ENCODE measurements at regions of chr4 and their contacts with region 1.

Region 1: DNA sequence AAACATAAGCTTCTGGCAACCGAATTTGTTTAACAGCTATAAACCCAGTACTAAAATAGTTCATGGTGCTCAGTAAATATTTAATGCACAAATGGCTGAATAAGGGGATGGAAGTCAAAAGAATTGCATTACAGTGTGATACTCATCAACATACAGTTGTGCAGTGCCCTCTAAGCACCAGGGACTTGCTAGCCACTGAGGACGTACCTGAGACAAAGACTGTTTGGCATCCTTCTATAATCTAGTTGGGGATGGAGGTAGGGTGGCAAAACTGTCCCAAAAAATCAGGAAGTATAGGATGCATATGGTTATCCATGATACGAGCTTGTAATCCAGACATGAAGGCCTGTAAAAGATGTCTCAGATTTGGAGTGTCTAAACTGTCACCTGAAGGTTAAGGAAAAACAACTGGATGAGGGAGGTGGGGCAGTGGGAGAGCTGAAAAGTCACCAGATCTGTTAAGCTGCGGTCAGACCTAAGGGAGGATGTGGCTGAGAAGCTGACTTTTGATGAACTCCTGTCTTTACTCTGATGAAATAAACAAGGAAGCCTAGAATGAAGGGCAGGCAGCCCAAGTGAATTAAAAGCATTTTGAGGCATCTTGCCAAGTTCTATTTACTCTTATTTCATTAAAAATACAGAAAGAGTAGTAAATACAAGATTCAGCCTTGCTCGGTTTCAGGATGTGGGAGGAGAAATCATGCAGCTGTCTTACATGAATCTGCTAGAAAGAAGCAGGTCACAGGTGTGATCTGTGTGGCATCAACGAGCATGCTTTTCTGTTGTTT is 12.0 kb upstream of the CD38 start:
- DNase-seq: peak in 11 of 14 experiments; percentile 19 to 87 (median 46)
- ATAC-seq: peak; percentile 82
- H3K4me3 ChIP-seq: no peak overlapping the region
- H3K4me3 Mint-ChIP-seq: peak overlapping the region; percentile 69
- H3K27ac ChIP-seq: peak overlapping the region; percentile 42 to 47
- H3K27ac Mint-ChIP-seq: peak overlapping the region; percentile 91
- H3K4me1 ChIP-seq: peaks cover 45% of the 10 kb centered on the region
- H3K4me1 Mint-ChIP-seq: peaks cover 51% of the 10 kb centered on the region
- H3K27me3 ChIP-seq: no peaks in the 10 kb centered on the region
- H3K27me3 Mint-ChIP-seq: no peaks in the 10 kb centered on the region
- CTCF ChIP-seq: no peak

Region 2: DNA sequence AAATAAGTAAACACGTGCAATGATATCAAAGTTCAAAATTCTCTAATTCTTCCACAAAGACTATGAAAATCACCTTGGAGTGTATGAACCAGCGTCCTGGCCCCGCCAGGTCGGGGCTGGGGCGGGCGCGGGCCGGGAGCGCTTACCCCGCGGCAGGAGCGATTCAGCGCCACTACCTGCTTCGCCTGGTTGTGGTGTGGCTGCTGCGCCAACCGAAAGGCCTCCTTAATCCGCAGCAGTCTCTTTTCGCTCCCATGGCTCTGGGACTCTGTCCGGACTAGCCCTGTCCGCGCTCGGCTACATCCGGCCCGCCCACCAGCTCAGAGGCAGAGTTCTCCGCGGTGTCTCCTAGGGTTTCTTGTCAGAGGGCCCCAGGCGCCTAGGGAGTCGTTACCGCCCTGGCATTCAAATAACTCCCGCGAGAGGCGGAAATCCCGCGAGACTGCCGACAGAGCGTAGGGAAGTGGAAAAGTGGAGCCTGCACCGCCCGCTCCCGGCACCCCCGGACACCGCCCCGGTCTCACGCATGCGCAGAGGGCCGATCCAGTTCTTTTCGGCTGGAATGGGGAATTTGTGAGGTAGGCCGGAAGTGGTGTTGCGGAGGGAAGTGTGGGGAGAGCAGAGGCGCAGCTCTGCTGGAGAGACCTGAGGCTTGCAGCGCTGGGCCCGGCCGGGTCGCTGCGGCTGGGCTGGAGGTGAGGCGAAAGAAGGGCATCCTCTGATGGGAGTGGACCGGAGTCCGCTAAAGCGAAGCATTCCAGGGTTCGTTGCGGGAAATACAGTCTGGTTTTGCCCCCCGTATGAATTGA is 84.7 kb before region 1 on chr4 and contains the start of gene FAM200B:
- CTCF ChIA-PET with region 1: interaction called, 3 read pairs
- POLR2A ChIA-PET with region 1: interaction called, 10 read pairs
- intact Hi-C with region 1: no loop called
- DNase-seq: peak; percentile 92 to 98 (median 96)
- ATAC-seq: peak; percentile 96
- H3K4me3 ChIP-seq: peak within 1 kb of the TSS; percentile 84
- H3K4me3 Mint-ChIP-seq: peak within 1 kb of the TSS; percentile 94
- H3K27ac ChIP-seq: peak within 1 kb of the TSS; percentile 71 to 77
- H3K27ac Mint-ChIP-seq: peak within 1 kb of the TSS; percentile 93
- H3K4me1 ChIP-seq: peaks cover 6% of the 10 kb centered on the region
- H3K4me1 Mint-ChIP-seq: peaks cover 46% of the 10 kb centered on the region
- H3K27me3 ChIP-seq: no peaks in the 10 kb centered on the region
- H3K27me3 Mint-ChIP-seq: no peaks in the 10 kb centered on the region
- CTCF ChIP-seq: no peak
- total RNA-seq, gene FAM200B: 18.5 to 22.1 TPM

Region 3: GRCh38 chr4:15778289-15779241 is 12.5 kb after region 1 on chr4 and contains the start of gene CD38:
- CTCF ChIA-PET with region 1: interaction called, 3 read pairs
- POLR2A ChIA-PET with region 1: interaction called, 28 read pairs
- intact Hi-C with region 1: loop called in 1 of 2 experiments (anchors 1 kb)
- DNase-seq: peak in 12 of 14 experiments; percentile 15 to 67 (median 40)
- ATAC-seq: peak; percentile 62
- H3K4me3 ChIP-seq: peak within 1 kb of the TSS; percentile 63
- H3K4me3 Mint-ChIP-seq: peak within 1 kb of the TSS; percentile 89
- H3K27ac ChIP-seq: peak within 1 kb of the TSS in 1 of 2 donors; percentile 24
- H3K27ac Mint-ChIP-seq: peak within 1 kb of the TSS; percentile 83
- H3K4me1 ChIP-seq: peaks cover 30% of the 10 kb centered on the region
- H3K4me1 Mint-ChIP-seq: peaks cover 77% of the 10 kb centered on the region
- H3K27me3 ChIP-seq: peaks cover 0 to 2% of the 10 kb centered on the region in 2 experiments
- H3K27me3 Mint-ChIP-seq: no peaks in the 10 kb centered on the region
- CTCF ChIP-seq: no peak
- total RNA-seq, gene CD38: 9.6 to 9.9 TPM

Measured in CD4-positive, alpha-beta T cell (primary cell).